MCF 10A (cell line): ENCODE measurements at regions of chr5 and their contacts with region 1.

Region 1: DNA sequence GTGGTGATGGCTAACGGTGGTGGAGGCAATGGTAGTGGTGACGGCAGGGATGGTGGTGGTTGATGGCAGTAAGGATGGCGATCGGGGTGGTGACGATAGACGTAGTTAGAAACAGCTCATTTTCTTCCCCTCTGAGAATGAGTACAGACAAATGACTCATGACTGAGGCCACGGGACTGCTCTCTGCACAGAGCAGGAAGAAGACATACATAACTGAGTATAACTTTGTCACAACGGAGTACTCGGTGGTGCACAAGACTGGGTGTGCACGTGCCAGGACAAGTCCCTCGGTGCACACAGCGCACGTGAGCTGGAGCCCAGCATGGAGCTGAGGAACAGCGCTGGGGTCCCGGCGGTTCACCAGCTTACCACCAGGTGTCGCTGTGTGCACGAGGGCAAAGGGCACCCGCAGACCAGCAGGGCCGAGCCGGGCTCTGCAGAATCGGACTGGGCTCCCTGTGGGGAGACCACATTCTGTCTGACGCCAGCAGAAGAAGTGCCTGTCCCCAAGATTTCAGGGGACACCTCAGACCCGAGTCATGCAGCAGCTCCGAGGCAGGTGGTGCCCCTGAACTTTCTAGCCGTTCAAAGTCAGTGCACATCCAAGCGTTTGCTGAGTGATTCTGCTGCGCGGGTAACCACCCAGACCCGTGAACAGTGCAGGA is 188.6 kb downstream of the FSTL4 start:
- DNase-seq: peak; percentile 75
- H3K4me3 Mint-ChIP-seq: no peak overlapping the region
- H3K27ac Mint-ChIP-seq: no peak overlapping the region
- H3K4me1 Mint-ChIP-seq: peaks cover 15% of the 10 kb centered on the region
- H3K27me3 Mint-ChIP-seq: no peaks in the 10 kb centered on the region
- CTCF ChIP-seq: peak; percentile 99

Region 2: GRCh38 chr5:133406977-133407678 is 16.6 kb before region 1 on chr5:
- CTCF ChIA-PET with region 1: interaction called, 20 read pairs
- POLR2A ChIA-PET with region 1: no interaction called
- intact Hi-C with region 1: no loop called
- DNase-seq: no peak
- H3K4me3 Mint-ChIP-seq: no peak overlapping the region
- H3K27ac Mint-ChIP-seq: no peak overlapping the region
- H3K4me1 Mint-ChIP-seq: no peaks in the 10 kb centered on the region
- H3K27me3 Mint-ChIP-seq: peaks cover 25% of the 10 kb centered on the region
- CTCF ChIP-seq: no peak

Region 3: DNA sequence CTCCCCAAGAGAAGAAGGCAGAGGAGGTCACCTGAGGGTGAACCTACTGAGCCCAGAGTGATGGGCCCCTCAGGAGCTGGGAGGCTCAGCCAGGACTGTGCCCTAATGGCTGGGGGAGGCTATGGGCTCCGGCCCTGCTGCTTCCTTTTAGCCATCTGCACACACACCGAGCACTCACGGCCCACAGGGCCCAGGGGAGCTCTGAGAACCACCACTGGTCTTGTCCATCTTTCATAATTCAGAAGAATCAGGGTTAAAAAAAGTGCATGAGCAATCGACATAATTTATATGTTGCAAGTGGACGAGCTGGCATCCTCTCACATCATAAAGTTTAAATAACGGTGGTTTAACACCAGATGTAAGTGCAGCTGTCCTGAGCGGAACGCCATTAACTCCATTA is 26.5 kb after region 1 on chr5:
- CTCF ChIA-PET with region 1: interaction called, 104 read pairs
- POLR2A ChIA-PET with region 1: no interaction called
- intact Hi-C with region 1: no loop called
- DNase-seq: no peak
- H3K4me3 Mint-ChIP-seq: no peak overlapping the region
- H3K27ac Mint-ChIP-seq: no peak overlapping the region
- H3K4me1 Mint-ChIP-seq: no peaks in the 10 kb centered on the region
- H3K27me3 Mint-ChIP-seq: no peaks in the 10 kb centered on the region
- CTCF ChIP-seq: no peak

Region 4: GRCh38 chr5:133487093-133487492 is 63.3 kb after region 1 on chr5:
- CTCF ChIA-PET with region 1: interaction called, 17 read pairs
- POLR2A ChIA-PET with region 1: no interaction called
- intact Hi-C with region 1: no loop called
- DNase-seq: no peak
- H3K4me3 Mint-ChIP-seq: no peak overlapping the region
- H3K27ac Mint-ChIP-seq: no peak overlapping the region
- H3K4me1 Mint-ChIP-seq: peaks cover 6% of the 10 kb centered on the region
- H3K27me3 Mint-ChIP-seq: peaks cover 22% of the 10 kb centered on the region
- CTCF ChIP-seq: no peak

Region 5: DNA sequence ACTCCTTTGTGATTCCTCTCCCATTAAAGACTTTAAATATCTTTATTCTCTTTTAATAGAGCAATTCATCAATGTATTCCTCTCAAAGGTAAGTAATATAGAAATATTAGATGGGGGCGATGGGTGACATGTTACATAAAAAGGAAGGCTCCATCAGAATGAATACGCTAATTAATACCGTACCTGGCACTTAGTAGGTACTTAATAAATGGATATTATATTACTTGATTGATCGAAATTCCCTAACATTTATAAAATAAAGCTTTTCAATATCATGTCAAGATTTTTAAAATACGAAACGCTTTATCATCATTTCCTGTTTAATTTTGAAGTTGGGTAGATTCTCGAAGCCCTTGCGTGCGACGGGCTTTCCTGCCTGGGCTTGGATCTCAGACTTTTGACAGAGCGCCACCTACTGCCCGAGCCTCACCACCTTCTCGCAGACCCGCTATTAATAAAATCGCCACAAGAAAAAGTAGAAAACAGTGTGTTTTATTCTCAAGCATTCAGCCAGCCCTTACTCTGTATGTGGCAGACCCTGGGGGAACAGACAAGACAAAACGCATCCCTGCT is 445.3 kb after region 1 on chr5:
- CTCF ChIA-PET with region 1: interaction called, 197 read pairs
- POLR2A ChIA-PET with region 1: interaction called, 5 read pairs
- intact Hi-C with region 1: loop called (anchors 1 kb)
- DNase-seq: peak; percentile 80
- H3K4me3 Mint-ChIP-seq: no peak overlapping the region
- H3K27ac Mint-ChIP-seq: no peak overlapping the region
- H3K4me1 Mint-ChIP-seq: no peaks in the 10 kb centered on the region
- H3K27me3 Mint-ChIP-seq: peaks cover 70% of the 10 kb centered on the region
- CTCF ChIP-seq: peak; percentile 86

Region 6: DNA sequence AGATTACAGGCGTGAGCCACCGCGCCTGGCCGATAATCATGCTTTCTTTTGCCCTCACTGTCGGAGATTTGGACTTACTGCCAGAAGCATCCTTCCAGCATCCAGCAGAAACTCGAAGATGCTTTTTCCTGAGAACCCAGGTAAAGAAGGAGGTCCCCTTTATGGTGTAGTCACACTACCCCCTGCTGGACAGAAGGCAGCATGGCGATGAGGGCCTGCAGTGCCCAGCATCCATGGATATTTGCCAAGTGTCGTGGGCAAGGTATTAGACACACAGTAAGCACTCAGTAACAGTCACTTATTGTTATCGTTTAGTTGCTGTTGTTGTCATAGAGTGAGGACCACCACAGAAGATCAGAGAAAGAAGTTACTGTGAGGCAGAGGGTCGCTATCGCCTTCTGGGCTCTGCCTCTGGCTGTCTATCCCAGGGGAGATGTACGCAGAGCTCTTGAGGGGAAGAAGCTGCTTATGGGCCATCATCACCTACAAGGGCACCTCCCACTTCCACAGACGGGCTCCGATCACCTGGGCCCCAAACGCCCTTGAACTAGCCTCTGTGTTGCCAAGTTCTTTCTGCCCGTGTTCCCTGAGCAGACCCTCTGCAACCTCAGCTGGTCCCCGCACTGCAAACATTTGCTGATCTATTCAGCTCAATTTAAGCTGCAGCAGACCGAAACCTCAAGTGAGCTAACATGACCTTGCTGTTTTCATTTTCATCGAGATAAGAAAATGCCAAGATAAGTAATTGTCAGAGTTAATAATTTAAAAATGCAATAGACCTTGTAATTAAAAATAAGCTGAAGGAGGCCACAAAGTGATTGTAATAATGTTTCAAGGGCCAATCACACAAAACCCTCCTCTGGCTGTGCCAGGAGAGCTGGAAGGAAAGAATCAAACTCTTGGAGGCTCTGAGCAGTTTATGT is 520.8 kb after region 1 on chr5:
- CTCF ChIA-PET with region 1: no interaction called
- POLR2A ChIA-PET with region 1: no interaction called
- intact Hi-C with region 1: loop called (anchors 1 kb)
- DNase-seq: peak; percentile 80
- H3K4me3 Mint-ChIP-seq: no peak overlapping the region
- H3K27ac Mint-ChIP-seq: no peak overlapping the region
- H3K4me1 Mint-ChIP-seq: no peaks in the 10 kb centered on the region
- H3K27me3 Mint-ChIP-seq: no peaks in the 10 kb centered on the region
- CTCF ChIP-seq: peak; percentile 61